ENCODE measurements at regions of chr5 and their contacts with region 1.

Region 1: GRCh38 chr5:157743163-157744050 is at the start of gene LSM11:
- DNase-seq: peak; percentile 27
- H3K4me3 ChIP-seq: peak within 1 kb of the TSS; percentile 70
- H3K27me3 ChIP-seq: no peaks in the 10 kb centered on the region
- CTCF ChIP-seq: peak; percentile 81
- polyA plus RNA-seq, gene LSM11: 2.4 and 3.2 TPM in 2 replicates

Region 2: DNA sequence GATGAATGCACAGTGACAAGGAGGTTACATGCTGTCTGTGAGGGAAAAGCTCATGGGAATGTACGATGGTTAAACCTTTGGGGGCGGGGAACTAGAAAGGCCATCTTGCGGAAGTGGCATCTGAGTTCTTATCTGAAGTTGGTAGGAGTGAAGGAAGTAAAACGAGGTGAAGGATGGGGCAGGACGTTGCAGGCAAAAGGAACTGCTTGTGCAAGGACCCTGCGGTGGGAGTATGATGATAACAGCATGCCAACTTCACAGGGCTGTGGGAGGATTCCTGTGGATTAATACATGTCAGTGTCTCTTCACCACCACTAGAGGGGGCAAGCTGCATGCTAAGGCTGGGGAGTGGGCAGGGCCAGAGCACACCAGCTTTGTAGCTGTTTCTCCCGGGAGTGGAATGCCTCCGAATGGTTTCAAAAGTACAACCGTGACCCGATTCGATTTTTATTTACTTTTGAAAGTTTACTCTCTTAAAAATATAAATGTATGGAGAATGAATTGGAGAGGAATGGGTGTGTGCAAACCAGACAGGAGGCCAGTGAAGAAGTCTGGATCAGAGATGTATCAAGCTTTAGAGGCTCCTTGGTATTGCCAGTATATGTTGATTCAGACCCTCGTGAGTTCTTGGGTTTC is 415.0 kb before region 1 on chr5:
- CTCF ChIA-PET with region 1: interaction called, 34 read pairs
- POLR2A ChIA-PET with region 1: no interaction called
- DNase-seq: peak; percentile 12
- H3K4me3 ChIP-seq: peak overlapping the region; percentile 20; the same call in 1 of the 2 replicates
- H3K27me3 ChIP-seq: no peaks in the 10 kb centered on the region
- CTCF ChIP-seq: peak; percentile 93

Region 3: GRCh38 chr5:157555037-157555640 is 188.3 kb before region 1 on chr5:
- CTCF ChIA-PET with region 1: no interaction called
- POLR2A ChIA-PET with region 1: no interaction called
- DNase-seq: no peak
- H3K4me3 ChIP-seq: no peak overlapping the region
- H3K27me3 ChIP-seq: no peaks in the 10 kb centered on the region
- CTCF ChIP-seq: no peak

Region 4: DNA sequence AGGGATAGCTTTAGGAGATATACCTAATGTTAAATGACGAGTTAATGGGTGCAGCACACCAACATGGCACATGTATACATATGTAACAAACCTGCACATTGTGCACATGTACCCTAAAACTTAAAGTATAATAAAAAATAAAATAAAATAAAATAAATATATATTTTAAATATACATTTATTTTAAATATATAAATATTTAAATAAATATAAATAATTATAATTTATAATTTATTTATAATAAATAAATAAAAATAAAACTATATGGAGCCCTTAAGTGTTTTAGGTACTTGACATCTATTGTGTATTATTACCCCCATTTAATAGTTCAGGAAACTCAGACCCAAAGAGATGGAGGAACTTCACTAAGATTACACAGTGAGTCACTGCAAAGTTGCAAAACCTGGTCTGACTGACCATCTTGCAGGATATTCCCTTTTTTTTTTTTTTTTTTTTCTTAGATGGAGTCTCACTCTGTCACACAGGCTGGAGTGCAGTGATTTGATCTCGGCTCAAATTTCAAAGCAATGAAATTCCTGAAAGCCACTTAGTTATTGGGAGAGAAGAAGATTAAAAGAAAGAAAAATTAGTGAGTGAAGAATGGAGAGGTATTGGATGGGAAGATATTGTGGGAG is 77.8 kb before region 1 on chr5:
- CTCF ChIA-PET with region 1: interaction called, 17 read pairs
- POLR2A ChIA-PET with region 1: no interaction called
- DNase-seq: peak; percentile 38
- H3K4me3 ChIP-seq: no peak overlapping the region
- H3K27me3 ChIP-seq: no peaks in the 10 kb centered on the region
- CTCF ChIP-seq: no peak

Region 5: DNA sequence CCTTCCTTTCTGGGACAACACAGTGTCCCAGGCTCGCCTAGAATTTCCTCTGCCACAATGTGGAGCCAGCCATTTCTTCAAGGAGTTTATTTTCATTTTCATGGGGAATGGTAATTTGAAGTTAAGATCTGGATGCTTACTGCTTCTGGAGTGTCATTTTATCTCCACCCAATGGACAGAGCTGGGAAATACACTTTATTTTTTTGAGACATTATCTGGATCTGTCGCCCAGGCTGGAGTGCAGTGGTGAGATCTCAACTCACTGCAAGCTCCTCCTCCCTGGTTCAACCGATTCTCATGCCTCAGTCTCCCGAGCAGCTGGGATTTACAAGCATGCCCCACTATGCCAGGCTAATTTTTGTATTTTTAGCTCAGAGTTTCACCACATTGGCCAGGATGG is 24.9 kb before region 1 on chr5:
- CTCF ChIA-PET with region 1: interaction called, 24 read pairs
- POLR2A ChIA-PET with region 1: no interaction called
- DNase-seq: peak; percentile 47
- H3K4me3 ChIP-seq: no peak overlapping the region
- H3K27me3 ChIP-seq: no peaks in the 10 kb centered on the region
- CTCF ChIP-seq: peak; percentile 62

Region 6: DNA sequence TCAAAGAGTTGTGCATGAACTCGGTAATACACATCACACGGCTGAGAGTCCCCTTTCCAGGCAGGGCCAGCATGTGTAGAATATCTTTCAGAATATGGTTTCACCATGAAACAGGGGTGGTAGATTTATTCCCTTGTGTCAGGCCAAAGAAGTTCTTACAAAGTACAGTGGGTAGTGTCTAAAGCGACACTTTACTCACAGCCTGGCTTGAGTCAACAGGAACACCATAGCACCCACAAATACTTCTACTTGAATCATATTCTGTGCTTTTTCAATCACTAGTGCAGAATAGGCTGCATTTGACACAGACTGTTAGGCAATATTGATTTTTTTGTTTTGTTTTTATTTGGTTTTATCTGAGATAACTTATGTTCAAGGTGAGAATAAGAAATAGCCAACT is 12.7 kb after region 1 on chr5:
- CTCF ChIA-PET with region 1: interaction called, 14 read pairs
- POLR2A ChIA-PET with region 1: no interaction called
- DNase-seq: no peak
- H3K4me3 ChIP-seq: no peak overlapping the region
- H3K27me3 ChIP-seq: no peaks in the 10 kb centered on the region
- CTCF ChIP-seq: no peak

Region 7: DNA sequence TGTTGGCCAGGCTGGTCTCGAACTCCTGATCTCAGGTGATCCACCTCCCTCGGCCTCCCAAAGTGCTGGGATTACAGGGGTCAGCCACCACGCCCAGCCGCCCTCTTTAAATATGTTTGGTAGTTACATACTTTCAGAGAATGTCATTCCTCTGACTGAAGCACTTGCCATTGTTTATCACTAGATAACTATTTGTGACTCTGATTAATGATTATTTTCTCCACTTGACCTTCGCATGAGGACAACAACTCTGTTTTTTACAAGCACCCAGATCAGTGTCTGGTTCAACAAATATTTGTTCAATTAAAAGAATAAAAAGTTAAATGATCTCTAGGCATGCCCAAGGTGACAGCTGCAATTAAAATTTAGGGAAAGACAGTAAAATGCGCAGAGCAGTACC is 59.3 kb after region 1 on chr5:
- CTCF ChIA-PET with region 1: no interaction called
- POLR2A ChIA-PET with region 1: no interaction called
- DNase-seq: no peak
- H3K4me3 ChIP-seq: no peak overlapping the region
- H3K27me3 ChIP-seq: no peaks in the 10 kb centered on the region
- CTCF ChIP-seq: no peak